Right cardiac atrium (tissue), 5 donors: ENCODE measurements at regions of chr13 and their contacts with region 1.

Region 1: GRCh38 chr13:80671773-80672172 is 330.8 kb upstream of the SPRY2 start:
- DNase-seq: no peak
- ATAC-seq: no peak
- H3K4me3 ChIP-seq: no peak overlapping the region
- H3K27ac ChIP-seq: no peak overlapping the region
- H3K4me1 ChIP-seq: peaks cover 3% of the 10 kb centered on the region
- H3K27me3 ChIP-seq: no peaks in the 10 kb centered on the region

Region 2: GRCh38 chr13:80633251-80633650 is 38.5 kb before region 1 on chr13:
- intact Hi-C with region 1: loop called in 1 of 4 experiments (anchors 2 kb)
- DNase-seq: no peak
- ATAC-seq: no peak
- H3K4me3 ChIP-seq: no peak overlapping the region
- H3K27ac ChIP-seq: no peak overlapping the region
- H3K4me1 ChIP-seq: no peaks in the 10 kb centered on the region
- H3K27me3 ChIP-seq: no peaks in the 10 kb centered on the region

Region 3: DNA sequence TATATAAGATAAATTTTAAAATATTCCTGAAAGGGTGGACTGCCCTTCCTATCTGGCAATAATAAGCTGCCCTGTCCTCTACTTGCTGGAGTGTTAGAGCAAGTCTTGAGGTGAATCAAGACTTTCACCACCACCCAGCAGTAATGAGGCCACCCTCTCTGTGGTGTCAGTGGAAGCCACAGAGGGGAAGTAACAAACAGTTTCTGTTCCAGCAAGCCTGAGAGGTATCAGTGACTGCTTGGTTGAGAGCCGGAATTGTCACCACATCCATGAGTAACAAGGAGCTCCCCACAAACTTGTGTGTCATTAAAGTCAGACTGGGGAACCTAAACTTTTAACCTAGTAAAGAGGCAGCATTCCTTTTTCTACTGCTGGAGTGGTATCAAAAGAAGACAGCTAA is 201.8 kb after region 1 on chr13:
- intact Hi-C with region 1: no loop called
- DNase-seq: no peak
- ATAC-seq: no peak
- H3K4me3 ChIP-seq: no peak overlapping the region
- H3K27ac ChIP-seq: no peak overlapping the region
- H3K4me1 ChIP-seq: no peaks in the 10 kb centered on the region
- H3K27me3 ChIP-seq: no peaks in the 10 kb centered on the region